Activated CD4-positive, alpha-beta T cell treated with anti-CD3 and anti-CD28 coated beads for 36 hours (primary cell): ENCODE measurements at regions of chrX and their contacts with region 1.

Region 1: GRCh38 chrX:107776649-107777535 is 641 bp upstream of the NCBP2L start:
- DNase-seq: peak; percentile 88
- ATAC-seq: peak; percentile 80
- H3K4me3 Mint-ChIP-seq: peak overlapping the region; percentile 77
- H3K27ac Mint-ChIP-seq: peak overlapping the region; percentile 86
- H3K4me1 Mint-ChIP-seq: peaks cover 12% of the 10 kb centered on the region
- H3K27me3 Mint-ChIP-seq: no peaks in the 10 kb centered on the region

Region 2: DNA sequence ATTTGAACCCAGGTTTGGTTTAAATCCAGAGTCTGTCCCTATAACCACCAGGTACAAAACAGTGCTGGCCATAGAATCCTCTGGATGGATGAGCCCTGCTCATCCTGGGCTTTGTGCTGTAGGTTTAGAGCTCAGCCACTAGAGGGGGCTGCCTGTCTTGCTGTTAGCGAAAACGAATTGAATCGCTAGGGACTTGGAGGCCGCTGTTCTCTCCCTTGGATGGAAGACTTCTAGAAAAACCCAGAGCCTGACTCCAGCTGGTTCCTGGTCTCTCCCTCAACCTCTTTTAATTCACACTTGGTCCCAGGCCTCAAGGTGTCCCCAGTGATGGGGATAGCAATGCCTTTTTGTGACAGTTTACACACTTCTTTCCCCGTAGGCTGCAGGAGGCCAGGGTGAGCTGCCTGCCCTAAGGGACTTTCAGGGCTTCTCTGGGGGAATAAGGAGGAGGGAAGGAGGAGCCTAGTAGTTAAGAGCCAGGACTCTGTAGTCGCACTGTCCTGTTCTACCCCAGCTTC is 882.4 kb before region 1 on chrX:
- CTCF ChIA-PET with region 1: interaction called, 3 read pairs
- POLR2A ChIA-PET with region 1: no interaction called
- intact Hi-C with region 1: loop called in 1 of 2 experiments (anchors 10 kb)
- DNase-seq: peak; percentile 66
- ATAC-seq: peak; percentile 79
- H3K4me3 Mint-ChIP-seq: no peak overlapping the region
- H3K27ac Mint-ChIP-seq: no peak overlapping the region
- H3K4me1 Mint-ChIP-seq: no peaks in the 10 kb centered on the region
- H3K27me3 Mint-ChIP-seq: peaks cover 3% of the 10 kb centered on the region

Region 3: DNA sequence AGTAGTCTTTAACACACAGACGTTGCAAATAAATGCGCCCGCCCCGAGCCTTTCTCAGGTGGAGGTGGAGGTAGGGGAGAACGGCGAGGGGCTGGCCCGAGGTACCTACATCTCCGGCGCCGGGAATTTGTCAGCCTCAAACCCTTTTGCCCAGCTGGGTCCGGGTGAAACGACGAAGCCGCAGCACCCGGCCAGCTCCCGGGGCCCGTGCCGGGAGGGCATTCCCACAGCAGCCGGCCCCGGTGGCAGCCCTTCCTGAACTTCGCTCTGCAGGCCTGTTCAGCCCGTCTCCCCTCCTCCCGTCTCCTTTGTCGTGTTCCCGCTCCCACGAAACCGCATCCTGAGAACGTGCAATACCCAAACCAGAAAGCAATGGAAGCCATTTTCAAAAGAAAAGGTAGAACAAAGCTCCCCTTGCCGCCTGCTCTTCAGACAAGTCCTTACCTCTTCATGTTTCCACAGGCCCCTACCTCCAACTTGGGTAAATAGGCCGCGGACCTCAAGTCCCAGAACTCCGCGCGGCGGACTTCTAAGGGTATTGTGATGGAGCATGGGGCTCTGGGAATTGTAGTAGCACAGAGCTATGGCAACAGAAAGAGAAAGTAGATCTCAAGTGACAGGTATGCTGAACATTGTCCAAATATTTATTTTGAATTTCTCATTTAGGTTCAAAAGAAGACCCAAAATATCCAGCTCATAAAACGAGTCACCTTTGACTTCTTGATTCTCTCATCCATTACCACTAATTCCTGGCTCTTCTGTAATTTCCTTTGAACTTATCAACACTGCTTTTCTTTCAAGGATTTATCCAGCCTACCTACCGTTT is 658.4 kb before region 1 on chrX and contains the start of gene RBM41:
- CTCF ChIA-PET with region 1: no interaction called
- POLR2A ChIA-PET with region 1: no interaction called
- intact Hi-C with region 1: loop called in 1 of 2 experiments (anchors 5 kb)
- DNase-seq: peak; percentile 81
- ATAC-seq: peak; percentile 99
- H3K4me3 Mint-ChIP-seq: peak within 1 kb of the TSS; percentile 99
- H3K27ac Mint-ChIP-seq: peak within 1 kb of the TSS; percentile 98
- H3K4me1 Mint-ChIP-seq: peaks cover 27% of the 10 kb centered on the region
- H3K27me3 Mint-ChIP-seq: no peaks in the 10 kb centered on the region
- total RNA-seq, gene RBM41: 12.0 to 12.2 TPM

Region 4: DNA sequence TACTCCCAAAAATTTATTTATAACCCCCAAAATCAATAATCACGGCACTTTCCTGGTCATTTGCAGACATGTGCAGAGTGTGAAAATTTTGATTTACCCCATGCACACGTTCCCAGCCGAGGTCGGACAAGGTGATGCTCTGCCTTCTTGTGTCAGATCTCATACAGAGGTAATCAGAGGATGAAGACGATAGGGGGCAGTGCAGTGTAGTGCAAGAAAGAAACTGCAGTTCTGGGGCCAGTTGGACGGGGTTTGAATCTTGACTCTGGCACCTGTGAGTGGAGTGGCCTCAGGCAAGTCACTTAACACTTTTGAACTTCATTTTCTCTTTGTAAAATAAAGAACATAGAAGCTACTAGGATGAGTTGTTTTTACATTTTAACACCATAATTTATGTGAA is 239.1 kb before region 1 on chrX:
- CTCF ChIA-PET with region 1: interaction called, 5 read pairs
- POLR2A ChIA-PET with region 1: no interaction called
- intact Hi-C with region 1: loop called (anchors 1 to 2 kb)
- DNase-seq: peak; percentile 60
- ATAC-seq: peak; percentile 70
- H3K4me3 Mint-ChIP-seq: no peak overlapping the region
- H3K27ac Mint-ChIP-seq: no peak overlapping the region
- H3K4me1 Mint-ChIP-seq: no peaks in the 10 kb centered on the region
- H3K27me3 Mint-ChIP-seq: peaks cover 3% of the 10 kb centered on the region

Region 5: DNA sequence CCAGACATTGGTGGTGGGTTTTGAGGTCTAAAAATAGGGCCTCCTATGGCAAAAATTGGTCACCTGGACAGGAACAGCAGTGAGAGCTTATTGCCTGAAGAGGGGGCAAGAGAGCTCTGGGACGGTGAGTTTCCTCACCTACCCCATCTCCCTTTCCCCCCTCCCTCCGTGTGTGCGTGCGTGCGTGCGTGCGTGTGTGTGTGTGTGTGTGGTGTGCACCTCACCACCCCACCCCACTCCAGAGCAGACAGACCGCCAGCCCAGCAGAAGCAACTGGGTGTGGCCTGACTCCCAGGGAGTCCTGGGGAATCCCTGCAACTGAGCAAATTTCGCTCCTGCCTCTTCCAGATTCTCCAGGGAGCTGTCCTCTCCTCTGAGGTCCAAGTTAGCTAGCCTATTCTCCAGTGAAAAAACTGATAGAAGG is 103.9 kb before region 1 on chrX:
- CTCF ChIA-PET with region 1: interaction called, 34 read pairs
- POLR2A ChIA-PET with region 1: interaction called, 3 read pairs
- intact Hi-C with region 1: loop called (anchors 1 kb)
- DNase-seq: peak; percentile 87
- ATAC-seq: peak; percentile 52
- H3K4me3 Mint-ChIP-seq: peak overlapping the region; percentile 53
- H3K27ac Mint-ChIP-seq: peak overlapping the region; percentile 85
- H3K4me1 Mint-ChIP-seq: peaks cover 43% of the 10 kb centered on the region
- H3K27me3 Mint-ChIP-seq: no peaks in the 10 kb centered on the region

Region 6: GRCh38 chrX:107742700-107743191 is 34.1 kb before region 1 on chrX:
- CTCF ChIA-PET with region 1: interaction called, 6 read pairs
- POLR2A ChIA-PET with region 1: no interaction called
- intact Hi-C with region 1: loop called in 1 of 2 experiments (anchors 2 kb)
- DNase-seq: no peak
- ATAC-seq: no peak
- H3K4me3 Mint-ChIP-seq: peak overlapping the region; percentile 66
- H3K27ac Mint-ChIP-seq: peak overlapping the region; percentile 96
- H3K4me1 Mint-ChIP-seq: peaks cover 42% of the 10 kb centered on the region
- H3K27me3 Mint-ChIP-seq: no peaks in the 10 kb centered on the region

Region 7: DNA sequence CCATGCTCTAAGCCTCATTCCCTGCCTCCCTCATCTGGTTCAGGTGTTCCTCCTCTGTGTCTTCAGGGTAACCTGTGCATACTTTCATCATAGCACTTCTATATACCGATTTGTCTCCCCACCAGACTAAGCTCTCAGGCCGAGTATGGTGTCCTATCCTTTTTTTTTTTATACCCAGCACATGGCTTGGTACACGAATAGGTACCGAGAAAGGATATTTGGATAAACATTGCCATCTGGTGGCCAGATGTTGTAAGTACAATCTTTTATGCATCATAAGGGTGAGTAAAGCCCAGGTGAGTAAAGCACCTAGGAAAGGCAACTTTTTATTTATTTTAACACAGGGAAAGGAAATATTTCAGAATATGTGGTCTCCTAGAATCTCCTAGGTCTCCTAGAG is 117.1 kb after region 1 on chrX:
- CTCF ChIA-PET with region 1: interaction called, 6 read pairs
- POLR2A ChIA-PET with region 1: no interaction called
- intact Hi-C with region 1: loop called (anchors 1 to 5 kb)
- DNase-seq: peak; percentile 16
- ATAC-seq: peak; percentile 82
- H3K4me3 Mint-ChIP-seq: no peak overlapping the region
- H3K27ac Mint-ChIP-seq: no peak overlapping the region
- H3K4me1 Mint-ChIP-seq: no peaks in the 10 kb centered on the region
- H3K27me3 Mint-ChIP-seq: no peaks in the 10 kb centered on the region